Activated naive CD4-positive, alpha-beta T cell treated with anti-CD3 and anti-CD28 coated beads for 36 hours (primary cell): ENCODE measurements at regions of chr3 and their contacts with region 1.

Region 1: GRCh38 chr3:150495563-150496168 is 50.6 kb downstream of the SERP1 start:
- DNase-seq: peak; percentile 12
- H3K4me3 Mint-ChIP-seq: no peak overlapping the region
- H3K27ac Mint-ChIP-seq: no peak overlapping the region
- H3K4me1 Mint-ChIP-seq: no peaks in the 10 kb centered on the region
- H3K27me3 Mint-ChIP-seq: no peaks in the 10 kb centered on the region

Region 2: GRCh38 chr3:150227839-150228238 is 267.8 kb before region 1 on chr3:
- CTCF ChIA-PET with region 1: interaction called, 6 read pairs
- intact Hi-C with region 1: loop called (anchors 1 kb)
- DNase-seq: peak; percentile 72
- H3K4me3 Mint-ChIP-seq: no peak overlapping the region
- H3K27ac Mint-ChIP-seq: no peak overlapping the region
- H3K4me1 Mint-ChIP-seq: no peaks in the 10 kb centered on the region
- H3K27me3 Mint-ChIP-seq: peaks cover 12% of the 10 kb centered on the region

Region 3: GRCh38 chr3:150286390-150287147 is 209.1 kb before region 1 on chr3:
- CTCF ChIA-PET with region 1: interaction called, 44 read pairs
- intact Hi-C with region 1: loop called (anchors 1 kb)
- DNase-seq: peak; percentile 11
- H3K4me3 Mint-ChIP-seq: no peak overlapping the region
- H3K27ac Mint-ChIP-seq: no peak overlapping the region
- H3K4me1 Mint-ChIP-seq: no peaks in the 10 kb centered on the region
- H3K27me3 Mint-ChIP-seq: peaks cover 8% of the 10 kb centered on the region

Region 4: GRCh38 chr3:150303776-150304175 is 191.9 kb before region 1 on chr3:
- CTCF ChIA-PET with region 1: no interaction called
- intact Hi-C with region 1: loop called (anchors 1 kb)
- DNase-seq: peak; percentile 26
- H3K4me3 Mint-ChIP-seq: no peak overlapping the region
- H3K27ac Mint-ChIP-seq: no peak overlapping the region
- H3K4me1 Mint-ChIP-seq: no peaks in the 10 kb centered on the region
- H3K27me3 Mint-ChIP-seq: peaks cover 28% of the 10 kb centered on the region

Region 5: GRCh38 chr3:150737874-150738713 is 242.4 kb after region 1 on chr3:
- CTCF ChIA-PET with region 1: no interaction called
- intact Hi-C with region 1: no loop called
- DNase-seq: peak; percentile 81
- H3K4me3 Mint-ChIP-seq: peak overlapping the region; percentile 41
- H3K27ac Mint-ChIP-seq: peak overlapping the region; percentile 99
- H3K4me1 Mint-ChIP-seq: peaks cover 77% of the 10 kb centered on the region
- H3K27me3 Mint-ChIP-seq: no peaks in the 10 kb centered on the region